T-cell (primary cell): ENCODE measurements at regions of chr2 and their contacts with region 1.

Region 1: DNA sequence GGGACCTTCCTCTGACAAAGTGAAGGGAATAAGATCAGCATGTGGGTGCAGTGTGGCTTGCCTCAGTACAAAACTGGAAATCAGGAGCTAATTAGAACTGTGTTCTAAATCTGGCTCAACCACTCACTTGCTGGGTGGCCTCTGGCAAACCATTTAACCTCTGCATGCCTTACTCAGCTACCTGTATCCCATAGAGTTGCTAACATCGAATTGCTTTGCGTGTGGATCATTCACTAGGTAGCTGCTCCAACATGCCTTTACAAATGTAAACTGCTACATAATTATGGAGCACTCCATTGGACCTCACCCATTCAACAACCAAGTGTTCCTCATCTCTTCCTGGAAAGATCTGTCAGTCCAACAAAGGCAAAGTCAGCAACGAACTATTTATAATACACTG is 19.0 kb downstream of the PLEKHM3 start:
- DNase-seq: no peak
- ATAC-seq: no peak
- H3K4me3 ChIP-seq: no peak overlapping the region
- H3K4me3 Mint-ChIP-seq: no peak overlapping the region
- H3K27ac ChIP-seq: no peak overlapping the region
- H3K27ac Mint-ChIP-seq: no peak overlapping the region
- H3K4me1 ChIP-seq: no peaks in the 10 kb centered on the region
- H3K4me1 Mint-ChIP-seq: peaks cover 16 to 28% (median 20%) of the 10 kb centered on the region in 3 donors
- H3K27me3 ChIP-seq: no peaks in the 10 kb centered on the region
- H3K27me3 Mint-ChIP-seq: no peaks in the 10 kb centered on the region

Region 2: DNA sequence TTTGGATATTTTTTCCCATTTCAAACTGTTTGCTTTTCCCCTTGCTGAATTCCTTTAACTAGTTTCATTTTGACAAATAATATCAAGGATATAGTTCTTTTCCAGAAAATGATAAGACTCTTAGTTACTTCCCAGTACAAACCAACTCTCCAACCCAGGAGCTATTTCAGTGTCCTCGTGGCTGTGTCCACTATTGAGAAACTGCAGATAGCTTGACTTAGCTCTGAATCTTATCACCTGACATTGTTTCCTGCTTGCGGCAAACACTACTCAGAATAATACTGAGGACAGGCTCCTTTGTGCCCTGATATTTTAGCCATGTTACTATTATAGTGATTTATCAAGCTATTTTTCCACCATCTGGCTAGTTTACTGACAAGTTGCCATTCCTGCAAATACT is 915.2 kb before region 1 on chr2:
- CTCF ChIA-PET with region 1: no interaction called
- POLR2A ChIA-PET with region 1: no interaction called
- DNase-seq: no peak
- ATAC-seq: no peak
- H3K4me3 ChIP-seq: no peak overlapping the region
- H3K4me3 Mint-ChIP-seq: no peak overlapping the region
- H3K27ac ChIP-seq: no peak overlapping the region
- H3K27ac Mint-ChIP-seq: no peak overlapping the region
- H3K4me1 ChIP-seq: peaks cover 8 to 11% of the 10 kb centered on the region in 2 experiments
- H3K4me1 Mint-ChIP-seq: peaks cover 49 to 64% (median 57%) of the 10 kb centered on the region in 3 donors
- H3K27me3 ChIP-seq: no peaks in the 10 kb centered on the region
- H3K27me3 Mint-ChIP-seq: no peaks in the 10 kb centered on the region

Region 3: GRCh38 chr2:207974216-207974605 is 32.1 kb before region 1 on chr2:
- CTCF ChIA-PET with region 1: interaction called in 1 of 2 experiments, 12 read pairs
- POLR2A ChIA-PET with region 1: no interaction called
- DNase-seq: no peak
- ATAC-seq: no peak
- H3K4me3 ChIP-seq: no peak overlapping the region
- H3K4me3 Mint-ChIP-seq: no peak overlapping the region
- H3K27ac ChIP-seq: no peak overlapping the region
- H3K27ac Mint-ChIP-seq: no peak overlapping the region
- H3K4me1 ChIP-seq: peaks cover 0 to 3% of the 10 kb centered on the region in 2 experiments
- H3K4me1 Mint-ChIP-seq: peaks cover 20 to 24% (median 22%) of the 10 kb centered on the region in 3 donors
- H3K27me3 ChIP-seq: no peaks in the 10 kb centered on the region
- H3K27me3 Mint-ChIP-seq: no peaks in the 10 kb centered on the region

Region 4: GRCh38 chr2:208265801-208266552 is 259.6 kb after region 1 on chr2 and contains the start of gene PIKFYVE:
- CTCF ChIA-PET with region 1: no interaction called
- POLR2A ChIA-PET with region 1: no interaction called
- DNase-seq: peak; percentile 71 to 92 (median 82)
- ATAC-seq: peak; percentile 87 to 88 (median 88)
- H3K4me3 ChIP-seq: peak within 1 kb of the TSS; percentile 72 to 75
- H3K4me3 Mint-ChIP-seq: peak within 1 kb of the TSS; percentile 92 to 95 (median 94)
- H3K27ac ChIP-seq: peak within 1 kb of the TSS; percentile 74
- H3K27ac Mint-ChIP-seq: peak within 1 kb of the TSS; percentile 93 to 97
- H3K4me1 ChIP-seq: peaks cover 13 to 30% of the 10 kb centered on the region in 2 experiments
- H3K4me1 Mint-ChIP-seq: peaks cover 46 to 57% (median 56%) of the 10 kb centered on the region in 3 donors
- H3K27me3 ChIP-seq: no peaks in the 10 kb centered on the region
- H3K27me3 Mint-ChIP-seq: no peaks in the 10 kb centered on the region
- total RNA-seq, gene PIKFYVE: 35.3 to 42.6 (median 38.6) TPM